Activated T-helper 1 cell treated with anti-CD3 and anti-CD28 coated beads, Interleukin-12 subunit alpha, Interleukin-12 subunit beta, Interleukin-2, Interleukin-4 antibody, amounts not matched to agents 30 ng/mL and 10 ng/mL and 1 ng/mL, durations not matched to agents 14 hours and 24 hours and 36 hours (primary cell): ENCODE measurements at regions of chr17 and their contacts with region 1.

Region 1: DNA sequence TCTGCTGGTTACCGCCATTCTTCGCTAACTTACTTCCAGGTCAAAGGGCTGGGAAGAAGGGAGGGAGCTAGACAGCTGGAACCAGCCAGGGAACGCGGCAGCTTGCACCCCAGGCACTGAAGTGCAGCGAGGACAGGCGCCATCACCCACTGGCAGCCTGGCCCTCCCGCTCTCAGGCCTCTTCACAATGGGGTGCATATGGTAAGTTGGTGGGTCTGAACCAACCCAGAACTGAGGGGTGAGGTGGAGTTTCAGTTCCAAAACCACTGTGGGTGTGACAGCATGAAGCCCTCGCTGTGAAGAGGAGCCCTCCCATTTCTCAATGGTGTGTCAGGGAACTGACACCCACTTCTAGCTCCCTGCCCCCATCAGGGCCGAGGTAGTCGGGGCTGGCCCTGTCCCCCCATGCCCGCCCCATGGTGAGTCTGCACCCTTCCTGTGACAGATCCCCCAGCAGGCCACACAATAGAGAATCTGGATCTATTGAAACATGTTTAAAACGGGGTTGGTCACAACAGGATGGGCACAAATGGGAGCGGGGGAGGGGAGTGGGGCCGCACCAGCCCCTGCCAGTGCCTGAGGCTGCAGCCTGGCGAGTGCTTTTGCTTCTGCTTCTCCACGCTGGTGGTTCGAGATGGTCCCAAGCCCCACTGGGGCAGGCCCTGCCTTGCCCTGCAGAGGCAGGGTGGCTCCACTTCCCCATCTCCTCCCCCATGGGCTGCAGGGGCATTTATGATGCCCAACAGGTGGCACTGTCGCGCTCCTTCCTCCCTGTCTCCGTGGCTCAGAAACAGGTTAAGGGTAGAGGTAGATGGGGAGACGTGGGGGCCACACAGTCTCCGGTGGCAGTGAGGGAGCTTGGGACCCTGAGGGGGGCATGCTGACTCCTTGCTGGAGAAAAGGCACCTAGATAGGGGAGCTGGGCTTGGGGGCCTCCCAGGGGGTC is 2.3 kb downstream of the LIMD2 start:
- DNase-seq: peak; percentile 76
- H3K4me3 Mint-ChIP-seq: peak overlapping the region; percentile 96
- H3K27ac Mint-ChIP-seq: peak overlapping the region; percentile 96
- H3K4me1 Mint-ChIP-seq: peaks cover 53% of the 10 kb centered on the region
- H3K27me3 Mint-ChIP-seq: no peaks in the 10 kb centered on the region

Region 2: GRCh38 chr17:63714547-63715277 is 17.1 kb after region 1 on chr17:
- intact Hi-C with region 1: loop called (anchors 1 kb)
- DNase-seq: no peak
- H3K4me3 Mint-ChIP-seq: no peak overlapping the region
- H3K27ac Mint-ChIP-seq: no peak overlapping the region
- H3K4me1 Mint-ChIP-seq: peaks cover 6% of the 10 kb centered on the region
- H3K27me3 Mint-ChIP-seq: no peaks in the 10 kb centered on the region

Region 3: GRCh38 chr17:63741221-63742049 is 43.8 kb after region 1 on chr17 and contains the start of gene STRADA:
- intact Hi-C with region 1: loop called (anchors 1 kb)
- DNase-seq: peak; percentile 99
- H3K4me3 Mint-ChIP-seq: peak within 1 kb of the TSS; percentile 98
- H3K27ac Mint-ChIP-seq: peak within 1 kb of the TSS; percentile 97
- H3K4me1 Mint-ChIP-seq: peaks cover 25% of the 10 kb centered on the region
- H3K27me3 Mint-ChIP-seq: no peaks in the 10 kb centered on the region
- total RNA-seq, gene STRADA: 59.1 and 59.4 TPM in 2 replicates

Region 4: GRCh38 chr17:63773381-63774140 is 75.9 kb after region 1 on chr17 and contains the start of gene CCDC47:
- intact Hi-C with region 1: loop called (anchors 1 kb)
- DNase-seq: peak; percentile 99
- H3K4me3 Mint-ChIP-seq: peak within 1 kb of the TSS; percentile 96
- H3K27ac Mint-ChIP-seq: peak within 1 kb of the TSS; percentile 100
- H3K4me1 Mint-ChIP-seq: peaks cover 63% of the 10 kb centered on the region
- H3K27me3 Mint-ChIP-seq: no peaks in the 10 kb centered on the region
- total RNA-seq, gene CCDC47: 74.8 and 79.2 TPM in 2 replicates

Region 5: GRCh38 chr17:63848834-63849700 is 151.5 kb after region 1 on chr17:
- intact Hi-C with region 1: no loop called
- DNase-seq: peak; percentile 94
- H3K4me3 Mint-ChIP-seq: peak overlapping the region; percentile 80
- H3K27ac Mint-ChIP-seq: peak overlapping the region; percentile 97
- H3K4me1 Mint-ChIP-seq: peaks cover 27% of the 10 kb centered on the region
- H3K27me3 Mint-ChIP-seq: peaks cover 14% of the 10 kb centered on the region